ENCODE measurements at regions of chr1 and their contacts with region 1.

Region 1: GRCh38 chr1:27044613-27045151 is 32.0 kb upstream of the TENT5B start:
- DNase-seq: no peak
- H3K4me3 ChIP-seq: no peak overlapping the region
- CTCF ChIP-seq: peak; percentile 95

Region 2: GRCh38 chr1:26607186-26607585 is 437.5 kb before region 1 on chr1:
- CTCF ChIA-PET with region 1: no interaction called
- POLR2A ChIA-PET with region 1: no interaction called
- DNase-seq: no peak
- H3K4me3 ChIP-seq: no peak overlapping the region
- CTCF ChIP-seq: no peak

Region 3: DNA sequence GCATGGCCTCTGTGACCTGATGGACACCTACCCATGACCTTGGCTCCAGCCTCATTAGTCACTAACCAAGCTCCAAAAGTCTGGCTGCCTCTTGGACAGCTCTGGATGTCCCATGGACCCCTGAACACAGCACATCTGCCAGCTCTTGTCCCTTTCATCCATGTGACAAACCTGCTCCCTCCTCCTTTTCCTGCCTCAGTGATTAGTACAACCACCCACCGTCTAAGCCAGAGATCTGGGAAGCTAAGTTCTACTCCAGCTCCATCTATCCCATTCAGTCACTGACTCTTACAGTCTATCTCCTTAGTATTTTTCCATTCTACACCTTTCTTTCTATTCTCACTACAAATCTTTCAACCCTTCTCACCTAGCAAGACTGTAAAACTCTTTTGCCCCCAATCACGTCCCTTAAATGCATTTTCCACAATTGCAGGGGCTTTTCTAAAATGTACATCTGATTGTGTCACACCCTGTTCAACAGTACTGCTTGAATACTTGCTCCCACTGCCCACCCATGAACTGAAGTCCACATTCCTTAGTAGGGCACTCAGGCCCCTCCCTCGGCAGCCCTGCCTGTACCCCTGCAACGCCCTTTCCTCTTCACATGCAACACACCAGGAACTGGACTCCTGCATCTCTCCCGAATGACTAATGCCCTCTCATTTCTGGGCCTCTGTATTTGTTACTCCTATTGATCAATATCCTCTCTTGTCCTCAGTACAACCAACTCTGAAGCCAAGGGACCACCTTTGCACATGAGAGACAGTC is 161.8 kb before region 1 on chr1:
- CTCF ChIA-PET with region 1: no interaction called
- POLR2A ChIA-PET with region 1: no interaction called
- DNase-seq: no peak
- H3K4me3 ChIP-seq: no peak overlapping the region
- CTCF ChIP-seq: no peak

Region 4: DNA sequence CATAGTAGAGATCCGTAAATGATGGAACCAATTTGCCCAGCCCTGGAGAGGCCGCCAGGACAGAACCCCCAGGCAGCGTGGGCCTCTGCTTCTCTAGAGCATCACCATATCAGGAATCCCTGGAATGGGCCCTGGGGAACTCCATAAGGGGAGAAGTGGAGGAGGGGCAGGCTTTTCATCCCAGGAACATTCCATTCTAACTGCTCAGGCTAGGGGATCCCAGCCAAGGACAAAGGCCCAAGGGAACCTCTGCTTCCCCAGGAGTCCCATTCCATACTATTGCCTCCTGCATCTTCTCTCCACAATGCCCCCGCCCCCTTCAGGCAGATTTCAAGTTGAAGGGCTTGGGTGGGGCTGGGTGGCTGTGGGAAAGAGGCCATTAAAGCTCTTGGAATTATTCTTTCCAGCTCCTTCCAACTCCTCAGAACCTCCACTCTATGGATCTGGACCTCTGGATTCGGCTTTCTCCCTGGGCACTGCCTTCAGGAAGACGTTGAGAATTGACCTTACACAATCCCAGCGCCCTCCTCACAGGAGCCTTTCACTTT is 45.2 kb before region 1 on chr1:
- CTCF ChIA-PET with region 1: interaction called, 69 read pairs
- POLR2A ChIA-PET with region 1: no interaction called
- DNase-seq: peak; percentile 96
- H3K4me3 ChIP-seq: no peak overlapping the region
- CTCF ChIP-seq: peak; percentile 22

Region 5: GRCh38 chr1:27057801-27058625 is 13.3 kb after region 1 on chr1:
- CTCF ChIA-PET with region 1: interaction called, 187 read pairs
- POLR2A ChIA-PET with region 1: no interaction called
- DNase-seq: no peak
- H3K4me3 ChIP-seq: no peak overlapping the region
- CTCF ChIP-seq: no peak

Region 6: DNA sequence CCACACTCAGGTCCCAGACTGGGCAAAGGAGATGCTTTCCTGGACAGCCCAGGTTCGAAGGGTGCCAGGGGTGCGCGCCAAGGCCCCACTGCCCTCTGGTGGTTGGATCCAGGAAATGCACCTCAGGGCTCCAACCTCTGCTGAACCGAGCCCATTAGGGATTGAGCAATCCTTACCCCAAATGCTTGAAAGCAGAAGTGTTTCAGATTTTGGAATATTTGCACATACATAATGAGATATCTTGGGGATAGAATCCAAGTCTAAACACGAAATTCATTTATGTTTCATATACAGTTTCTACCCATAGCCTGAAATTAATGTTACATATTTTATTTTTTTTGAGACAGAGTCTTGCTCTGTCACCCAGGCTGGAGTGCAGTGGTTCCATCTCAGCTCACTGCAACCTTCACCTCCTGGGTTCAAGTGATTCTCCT is 52.8 kb after region 1 on chr1:
- CTCF ChIA-PET with region 1: interaction called, 903 read pairs
- POLR2A ChIA-PET with region 1: interaction called, 4 read pairs
- DNase-seq: peak; percentile 12
- H3K4me3 ChIP-seq: no peak overlapping the region
- CTCF ChIP-seq: peak; percentile 97

Region 7: DNA sequence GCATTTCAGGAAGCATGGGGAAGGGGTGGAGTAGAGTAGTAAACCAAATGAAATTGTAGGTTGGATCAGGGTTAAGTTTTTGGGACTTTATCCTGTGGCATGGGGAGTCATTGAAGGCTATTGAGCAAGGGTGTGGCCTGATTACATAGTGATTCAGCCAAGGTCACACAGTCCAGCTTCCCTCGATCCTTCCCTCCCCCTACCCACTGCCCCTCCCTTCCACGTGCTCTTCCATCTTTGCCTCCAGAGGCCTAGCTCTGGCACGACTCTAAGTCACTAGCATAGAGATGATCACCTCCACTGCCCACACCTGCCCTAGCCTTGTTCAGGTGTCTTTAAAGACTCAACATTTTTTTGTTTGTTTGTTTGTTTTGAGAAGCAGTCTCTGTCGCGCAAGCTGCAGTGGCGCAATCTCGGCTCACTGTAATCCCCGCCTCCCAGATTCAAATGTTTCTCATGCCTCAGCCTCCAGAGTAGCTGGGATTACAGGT is 147.4 kb after region 1 on chr1:
- CTCF ChIA-PET with region 1: interaction called, 19 read pairs
- POLR2A ChIA-PET with region 1: no interaction called
- DNase-seq: no peak
- H3K4me3 ChIP-seq: no peak overlapping the region
- CTCF ChIP-seq: no peak

Region 8: DNA sequence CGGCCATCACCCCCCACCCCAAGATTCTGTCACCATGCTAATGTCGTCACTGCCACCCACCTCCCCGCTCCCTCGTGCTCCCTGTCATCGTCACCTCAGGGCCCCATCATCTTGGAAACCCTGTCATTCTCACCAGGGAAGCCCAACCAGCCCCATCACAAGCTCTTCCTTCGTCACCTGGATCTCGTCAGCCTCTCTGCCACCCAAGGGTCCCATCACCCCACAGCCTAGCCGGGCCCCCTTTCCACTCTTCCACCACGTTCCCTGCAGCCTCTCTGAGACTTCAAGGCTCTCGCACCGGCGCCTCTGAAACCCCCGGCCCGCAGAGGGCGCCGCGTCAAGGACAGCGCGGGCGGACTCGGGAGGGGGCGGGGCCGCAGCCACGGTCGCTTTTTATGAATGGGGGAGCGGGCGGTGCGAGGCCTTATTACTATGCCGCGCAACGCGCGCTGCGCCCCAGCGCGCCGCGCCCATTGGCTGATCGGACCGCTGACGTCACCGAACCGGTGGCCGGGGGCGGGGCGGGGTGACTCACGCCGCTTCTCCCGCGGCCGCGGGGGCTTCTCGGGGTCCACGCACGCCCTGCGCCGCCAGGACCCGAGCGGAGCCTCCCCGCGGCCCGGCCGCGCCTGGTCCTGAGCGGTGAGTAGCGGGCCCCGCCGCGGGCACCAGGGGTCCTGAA is 347.6 kb after region 1 on chr1 and contains the start of gene GPR3:
- CTCF ChIA-PET with region 1: interaction called, 43 read pairs
- POLR2A ChIA-PET with region 1: no interaction called
- DNase-seq: no peak
- H3K4me3 ChIP-seq: peak within 1 kb of the TSS; percentile 71
- CTCF ChIP-seq: peak; percentile 83

Measured in AG04449 (cell line).